CD8-positive, alpha-beta T cell (primary cell): ENCODE measurements at regions of chr2 and their contacts with region 1.

Region 1: GRCh38 chr2:189440947-189441708 is at the start of gene WDR75:
- DNase-seq: peak; percentile 85 to 97 (median 92)
- ATAC-seq: peak; percentile 94
- H3K4me3 ChIP-seq: peak within 1 kb of the TSS; percentile 71 to 92
- H3K4me3 Mint-ChIP-seq: peak within 1 kb of the TSS; percentile 100
- H3K27ac ChIP-seq: peak within 1 kb of the TSS; percentile 96 to 98
- H3K27ac Mint-ChIP-seq: peak within 1 kb of the TSS; percentile 100
- H3K4me1 ChIP-seq: peaks cover 33% of the 10 kb centered on the region
- H3K4me1 Mint-ChIP-seq: peaks cover 12% of the 10 kb centered on the region
- H3K27me3 ChIP-seq: no peaks in the 10 kb centered on the region
- H3K27me3 Mint-ChIP-seq: no peaks in the 10 kb centered on the region
- CTCF ChIP-seq: no peak
- total RNA-seq, gene WDR75: 45.0 to 52.6 TPM

Region 2: DNA sequence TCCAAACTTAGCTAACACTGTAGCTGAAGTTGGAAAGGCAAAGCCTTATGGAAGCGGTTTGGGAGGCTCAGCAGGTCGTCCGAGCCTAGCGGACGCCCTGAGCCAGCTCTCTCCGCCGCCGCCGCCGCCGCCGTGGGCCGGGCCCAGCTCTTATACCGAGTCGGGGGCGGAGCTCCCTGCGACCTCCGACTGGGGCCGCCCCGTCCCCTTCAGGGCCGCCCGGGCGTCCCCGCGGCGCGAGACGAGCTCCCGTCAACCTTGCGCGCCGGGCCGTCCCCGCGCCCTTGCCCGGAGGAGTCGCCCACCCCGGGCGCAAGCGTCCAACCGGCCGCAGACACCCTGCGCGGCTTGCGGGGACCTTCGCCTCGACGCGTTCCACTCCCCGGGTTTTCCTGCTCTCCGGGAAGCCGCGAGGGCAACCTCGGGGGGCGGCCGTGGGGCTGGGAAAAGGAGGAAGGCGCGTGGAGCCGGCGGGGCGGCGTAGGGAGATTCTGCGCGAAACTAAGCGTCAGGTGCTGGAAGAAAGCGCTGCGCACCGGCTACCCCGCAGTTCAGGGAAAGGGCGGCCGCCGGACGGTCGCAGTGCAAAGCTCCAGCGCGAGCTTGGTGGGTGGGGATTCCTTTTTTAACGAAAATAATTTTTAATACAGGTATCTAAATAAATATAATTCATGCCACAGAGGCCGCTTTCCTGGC is 139.7 kb after region 1 on chr2 and contains the start of gene SLC40A1:
- CTCF ChIA-PET with region 1: no interaction called
- POLR2A ChIA-PET with region 1: interaction called, 8 read pairs
- intact Hi-C with region 1: loop called in 1 of 2 experiments (anchors 2 kb)
- DNase-seq: peak in 8 of 9 experiments; percentile 36 to 78 (median 59)
- ATAC-seq: peak; percentile 95
- H3K4me3 ChIP-seq: peak within 1 kb of the TSS; percentile 55 to 63
- H3K4me3 Mint-ChIP-seq: peak within 1 kb of the TSS; percentile 91
- H3K27ac ChIP-seq: peak within 1 kb of the TSS; percentile 29
- H3K27ac Mint-ChIP-seq: peak within 1 kb of the TSS; percentile 81
- H3K4me1 ChIP-seq: peaks cover 17% of the 10 kb centered on the region
- H3K4me1 Mint-ChIP-seq: peaks cover 38% of the 10 kb centered on the region
- H3K27me3 ChIP-seq: peaks cover 0 to 2% of the 10 kb centered on the region in 2 experiments
- H3K27me3 Mint-ChIP-seq: peaks cover 17% of the 10 kb centered on the region
- CTCF ChIP-seq: no peak
- total RNA-seq, gene SLC40A1: 1.3 to 1.9 TPM

Region 3: DNA sequence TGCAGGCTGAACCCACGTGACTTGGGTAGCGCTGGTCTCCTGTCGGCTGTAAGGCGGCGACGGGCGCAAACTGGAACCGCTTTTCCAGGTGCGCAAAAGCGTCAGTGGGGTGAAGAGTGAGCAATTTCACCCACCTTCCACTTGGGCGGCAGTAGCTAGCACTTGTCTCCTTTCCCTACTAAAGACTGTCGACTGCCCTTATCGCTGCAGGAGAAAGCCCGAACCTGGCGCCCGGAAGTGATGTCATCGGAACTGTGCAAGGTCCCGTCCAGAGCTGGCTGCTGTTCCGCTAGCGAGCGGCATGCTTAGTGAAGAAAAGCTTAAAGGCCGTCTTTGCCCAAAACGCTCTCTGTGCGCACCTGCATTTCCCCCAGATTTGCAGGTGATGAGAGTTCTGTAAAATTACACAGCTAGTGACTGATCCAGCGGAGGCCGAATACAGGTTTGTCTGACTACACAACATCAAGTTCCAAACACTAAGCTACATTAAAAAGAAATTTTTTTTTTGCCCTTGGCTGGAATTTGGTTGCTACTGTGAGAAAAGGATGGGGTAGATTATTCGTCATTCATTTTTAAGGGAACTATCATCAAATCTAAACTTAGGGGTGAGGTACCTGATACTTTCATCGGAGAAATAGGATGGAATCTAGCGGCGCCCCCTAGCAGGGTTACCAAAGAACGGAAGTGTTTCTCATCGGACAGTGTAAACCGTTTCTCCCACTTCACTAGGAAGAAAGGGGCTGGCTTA is 321.6 kb after region 1 on chr2 and contains the start of gene OSGEPL1:
- CTCF ChIA-PET with region 1: interaction called, 3 read pairs
- POLR2A ChIA-PET with region 1: interaction called, 10 read pairs
- intact Hi-C with region 1: loop called (anchors 2 kb)
- DNase-seq: peak; percentile 84 to 97 (median 94)
- ATAC-seq: peak; percentile 92
- H3K4me3 ChIP-seq: peak within 1 kb of the TSS; percentile 69 to 83
- H3K4me3 Mint-ChIP-seq: peak within 1 kb of the TSS; percentile 97
- H3K27ac ChIP-seq: peak within 1 kb of the TSS; percentile 85 to 88
- H3K27ac Mint-ChIP-seq: peak within 1 kb of the TSS; percentile 98
- H3K4me1 ChIP-seq: peaks cover 8% of the 10 kb centered on the region
- H3K4me1 Mint-ChIP-seq: peaks cover 15% of the 10 kb centered on the region
- H3K27me3 ChIP-seq: no peaks in the 10 kb centered on the region
- H3K27me3 Mint-ChIP-seq: no peaks in the 10 kb centered on the region
- CTCF ChIP-seq: peak; percentile 52
- total RNA-seq, gene OSGEPL1: 3.6 to 3.9 TPM

Region 4: GRCh38 chr2:190408538-190409271 is 967.6 kb after region 1 on chr2:
- CTCF ChIA-PET with region 1: no interaction called
- POLR2A ChIA-PET with region 1: no interaction called
- intact Hi-C with region 1: loop called (anchors 5 to 10 kb)
- DNase-seq: peak; percentile 62 to 92 (median 80)
- ATAC-seq: peak; percentile 56
- H3K4me3 ChIP-seq: peak overlapping the region; percentile 69 to 89
- H3K4me3 Mint-ChIP-seq: peak overlapping the region; percentile 92
- H3K27ac ChIP-seq: peak overlapping the region; percentile 98 to 99
- H3K27ac Mint-ChIP-seq: peak overlapping the region; percentile 99
- H3K4me1 ChIP-seq: peaks cover 51% of the 10 kb centered on the region
- H3K4me1 Mint-ChIP-seq: peaks cover 45% of the 10 kb centered on the region
- H3K27me3 ChIP-seq: no peaks in the 10 kb centered on the region
- H3K27me3 Mint-ChIP-seq: no peaks in the 10 kb centered on the region
- CTCF ChIP-seq: no peak

Region 5: GRCh38 chr2:191013932-191014652 is 1573.0 kb after region 1 on chr2 and contains the start of gene STAT1:
- CTCF ChIA-PET with region 1: no interaction called
- POLR2A ChIA-PET with region 1: no interaction called
- intact Hi-C with region 1: loop called (anchors 5 to 10 kb)
- DNase-seq: peak; percentile 93 to 98 (median 96)
- ATAC-seq: peak; percentile 87
- H3K4me3 ChIP-seq: peak within 1 kb of the TSS; percentile 61 to 88
- H3K4me3 Mint-ChIP-seq: no peak within 1 kb of the TSS
- H3K27ac ChIP-seq: peak within 1 kb of the TSS; percentile 91 to 94
- H3K27ac Mint-ChIP-seq: no peak within 1 kb of the TSS
- H3K4me1 ChIP-seq: peaks cover 59% of the 10 kb centered on the region
- H3K4me1 Mint-ChIP-seq: peaks cover 44% of the 10 kb centered on the region
- H3K27me3 ChIP-seq: no peaks in the 10 kb centered on the region
- H3K27me3 Mint-ChIP-seq: no peaks in the 10 kb centered on the region
- CTCF ChIP-seq: no peak
- total RNA-seq, gene STAT1: 66.7 to 69.9 TPM